K562 (cell line): ENCODE measurements at regions of chr7 and their contacts with region 1.

Region 1: GRCh38 chr7:151782598-151783448 is 94.1 kb downstream of the PRKAG2 start:
- DNase-seq: peak; percentile 81 to 96 (median 92)
- ATAC-seq: peak; percentile 99
- H3K4me3 ChIP-seq: no peak overlapping the region
- H3K27ac ChIP-seq: no peak overlapping the region
- H3K4me1 ChIP-seq: peaks cover 0 to 8% of the 10 kb centered on the region in 2 experiments; a peak in 2 of 5 replicates
- H3K27me3 ChIP-seq: peaks cover 55 to 78% of the 10 kb centered on the region in 2 experiments
- CTCF ChIP-seq: peak; percentile 98 to 99 (median 99)
- EP300 ChIP-seq: no peak
- POLR2A ChIP-seq: no peak
- RAD21 ChIP-seq: peak; percentile 77 to 83

Region 2: GRCh38 chr7:151932358-151932876 is 149.6 kb after region 1 on chr7:
- CTCF ChIA-PET with region 1: no interaction called
- POLR2A ChIA-PET with region 1: no interaction called
- in situ Hi-C with region 1: no loop called
- intact Hi-C with region 1: loop called (anchors 2 kb)
- DNase-seq: no peak
- ATAC-seq: no peak; the same call in 2 of the 3 replicates
- H3K4me3 ChIP-seq: no peak overlapping the region
- H3K27ac ChIP-seq: no peak overlapping the region
- H3K4me1 ChIP-seq: peaks cover 0 to 5% of the 10 kb centered on the region in 2 experiments; a peak in 3 of 5 replicates
- H3K27me3 ChIP-seq: peaks cover 46 to 72% of the 10 kb centered on the region in 2 experiments
- CTCF ChIP-seq: no peak
- EP300 ChIP-seq: no peak
- POLR2A ChIP-seq: no peak
- RAD21 ChIP-seq: no peak

Region 3: GRCh38 chr7:151992375-151992774 is 209.6 kb after region 1 on chr7:
- CTCF ChIA-PET with region 1: no interaction called
- POLR2A ChIA-PET with region 1: no interaction called
- in situ Hi-C with region 1: no loop called
- intact Hi-C with region 1: loop called (anchors 5 kb)
- DNase-seq: peak; percentile 29 to 71 (median 55)
- ATAC-seq: peak; percentile 97
- H3K4me3 ChIP-seq: no peak overlapping the region
- H3K27ac ChIP-seq: no peak overlapping the region
- H3K4me1 ChIP-seq: no peaks in the 10 kb centered on the region
- H3K27me3 ChIP-seq: peaks cover 49 to 60% of the 10 kb centered on the region in 2 experiments
- CTCF ChIP-seq: peak; percentile 64 to 72 (median 68)
- EP300 ChIP-seq: no peak
- POLR2A ChIP-seq: no peak
- RAD21 ChIP-seq: peak; percentile 31 to 65; a peak in 3 of 4 replicates

Region 4: DNA sequence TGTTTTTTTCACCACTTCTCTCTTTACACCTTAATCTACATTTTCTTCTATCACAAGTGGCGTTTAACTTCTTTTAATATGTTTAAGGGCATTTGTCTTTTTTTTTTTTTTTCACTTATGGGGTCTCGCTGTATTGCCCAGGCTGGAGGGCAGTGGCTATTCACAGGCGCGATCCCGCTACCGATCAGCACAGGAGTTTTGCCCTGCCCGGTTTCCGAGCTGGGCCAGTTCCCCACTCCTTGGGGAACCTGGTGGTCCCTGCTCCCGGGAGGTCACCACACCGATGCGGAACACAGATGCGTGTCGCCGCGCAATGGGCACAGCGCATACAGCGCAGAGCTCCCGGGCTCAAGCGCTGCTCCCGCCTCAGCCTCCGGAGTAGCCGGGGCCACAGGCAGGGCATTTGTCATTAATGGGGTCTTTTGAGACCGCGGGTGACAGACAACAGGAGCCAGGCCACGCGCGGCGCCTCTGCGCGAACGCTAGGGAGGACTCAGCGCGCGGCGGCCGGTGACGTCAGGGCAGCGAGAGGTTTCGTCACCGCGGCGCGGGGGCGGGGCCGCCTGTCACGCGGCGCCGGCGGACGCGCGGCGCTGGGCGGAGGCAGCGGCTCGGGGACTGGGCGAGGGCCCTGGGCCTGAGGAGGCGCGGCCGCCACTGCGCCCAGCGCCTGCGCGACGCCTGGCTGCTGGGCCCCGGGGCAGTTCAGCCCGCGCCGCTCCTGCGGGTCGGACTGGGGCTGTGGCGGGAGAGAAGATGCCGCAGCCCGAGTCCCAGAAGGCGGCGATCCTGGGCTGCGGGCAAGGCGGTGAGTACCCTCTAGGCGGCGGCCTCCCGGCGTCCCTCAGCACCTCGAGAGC is 242.5 kb after region 1 on chr7 and contains the start of gene GALNT11:
- CTCF ChIA-PET with region 1: interaction called, 5 read pairs
- POLR2A ChIA-PET with region 1: interaction called, 3 read pairs
- in situ Hi-C with region 1: no loop called
- intact Hi-C with region 1: loop called (anchors 5 kb)
- DNase-seq: peak; percentile 97 to 99 (median 98)
- ATAC-seq: peak; percentile 99
- H3K4me3 ChIP-seq: peak within 1 kb of the TSS; percentile 71
- H3K27ac ChIP-seq: peak within 1 kb of the TSS; percentile 86
- H3K4me1 ChIP-seq: peaks cover 3 to 15% of the 10 kb centered on the region in 2 experiments; a peak in 3 of 5 replicates
- H3K27me3 ChIP-seq: peaks cover 4 to 13% of the 10 kb centered on the region in 2 experiments; a peak in 4 of 5 replicates
- CTCF ChIP-seq: peak; percentile 17 to 78 (median 52); a peak in 4 of 6 replicates
- EP300 ChIP-seq: no peak; the same call in 1 of the 2 replicates
- POLR2A ChIP-seq: peak; percentile 92
- RAD21 ChIP-seq: no peak
- polyA plus RNA-seq, gene GALNT11: 8.2 to 11.1 TPM